Left cardiac atrium (tissue), 4 donors: ENCODE measurements at regions of chr16 and their contacts with region 1.

Region 1: DNA sequence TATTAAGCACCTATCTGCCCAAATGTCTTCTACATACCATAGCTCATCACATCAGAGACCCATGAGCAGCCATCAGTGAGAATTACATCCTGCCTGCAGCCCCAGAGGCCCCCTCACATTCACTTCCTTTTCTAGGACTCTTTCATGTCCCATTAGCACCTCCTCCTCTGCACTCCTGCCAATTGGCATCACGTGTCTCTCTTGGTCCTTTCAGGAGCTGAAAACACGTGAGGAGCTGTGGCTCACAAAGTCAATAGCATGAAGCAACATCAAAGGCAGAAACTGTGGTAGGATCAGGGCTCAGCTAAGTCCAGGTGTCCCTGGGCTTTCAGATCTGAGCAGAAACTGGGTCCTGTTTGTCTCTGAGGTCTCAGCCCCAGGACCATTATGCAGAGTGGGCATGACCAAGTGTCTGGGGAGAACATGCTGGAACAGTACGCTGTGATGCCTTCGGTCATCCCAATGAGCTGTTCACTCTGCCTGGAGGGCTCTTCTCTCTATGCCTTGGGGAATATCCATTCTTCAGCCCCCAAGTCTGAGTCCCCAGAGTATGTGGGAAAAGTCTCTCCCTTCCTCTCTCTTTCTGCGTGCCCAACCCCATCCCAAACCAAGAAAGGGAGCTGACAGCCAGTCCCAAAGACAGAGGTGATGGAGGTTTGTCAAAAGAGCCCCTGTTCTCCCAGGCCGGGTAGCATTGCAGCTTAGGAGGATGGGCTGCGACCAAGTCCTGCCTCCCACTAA is 457.0 kb upstream of the CDH5 start:
- DNase-seq: no peak
- ATAC-seq: no peak

Region 2: GRCh38 chr16:65754820-65755691 is 154.4 kb before region 1 on chr16:
- intact Hi-C with region 1: no loop called
- DNase-seq: peak; percentile 23
- ATAC-seq: peak in 1 of 2 donors; percentile 16

Region 3: GRCh38 chr16:65965628-65966027 is 56.1 kb after region 1 on chr16:
- intact Hi-C with region 1: loop called in 1 of 2 experiments (anchors 10 kb)
- DNase-seq: no peak
- ATAC-seq: no peak

Region 4: DNA sequence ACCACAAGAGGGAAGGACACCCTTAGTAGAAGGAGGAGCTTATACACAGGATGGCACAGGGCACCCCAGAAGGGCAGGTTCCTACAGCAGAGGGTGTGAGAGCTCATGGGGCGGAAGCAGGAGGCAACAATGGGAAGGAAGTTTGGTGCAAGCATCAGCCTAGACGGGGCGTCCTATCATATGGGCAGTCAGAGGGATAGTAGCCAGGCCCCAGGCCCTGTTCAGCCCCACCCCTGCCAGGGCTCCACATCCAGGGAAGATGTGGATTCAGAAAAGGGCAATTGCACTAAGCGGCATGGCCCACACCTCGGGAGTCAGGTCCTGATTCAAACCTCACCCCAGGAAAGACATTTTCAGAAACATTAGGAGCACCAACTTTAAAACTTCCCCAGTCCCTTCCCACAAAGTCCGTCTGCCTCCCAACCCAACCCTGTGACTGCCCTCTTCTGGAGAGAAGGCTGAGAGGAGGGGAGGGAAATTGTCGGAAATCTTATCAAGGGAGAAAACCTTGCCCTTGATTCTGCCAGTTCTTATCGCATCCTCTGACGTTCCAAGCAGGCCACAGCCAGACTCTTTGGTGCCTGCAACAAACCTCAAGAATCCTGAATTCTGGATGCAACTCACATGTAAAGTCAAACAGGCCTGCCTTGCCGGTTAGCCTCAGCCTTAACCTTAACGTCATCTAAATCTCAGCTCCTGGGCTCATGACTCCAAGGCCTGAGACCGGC is 258.2 kb after region 1 on chr16:
- intact Hi-C with region 1: no loop called
- DNase-seq: peak; percentile 36
- ATAC-seq: peak; percentile 68 to 77